ENCODE measurements at regions of chr18 and their contacts with region 1.

Region 1: DNA sequence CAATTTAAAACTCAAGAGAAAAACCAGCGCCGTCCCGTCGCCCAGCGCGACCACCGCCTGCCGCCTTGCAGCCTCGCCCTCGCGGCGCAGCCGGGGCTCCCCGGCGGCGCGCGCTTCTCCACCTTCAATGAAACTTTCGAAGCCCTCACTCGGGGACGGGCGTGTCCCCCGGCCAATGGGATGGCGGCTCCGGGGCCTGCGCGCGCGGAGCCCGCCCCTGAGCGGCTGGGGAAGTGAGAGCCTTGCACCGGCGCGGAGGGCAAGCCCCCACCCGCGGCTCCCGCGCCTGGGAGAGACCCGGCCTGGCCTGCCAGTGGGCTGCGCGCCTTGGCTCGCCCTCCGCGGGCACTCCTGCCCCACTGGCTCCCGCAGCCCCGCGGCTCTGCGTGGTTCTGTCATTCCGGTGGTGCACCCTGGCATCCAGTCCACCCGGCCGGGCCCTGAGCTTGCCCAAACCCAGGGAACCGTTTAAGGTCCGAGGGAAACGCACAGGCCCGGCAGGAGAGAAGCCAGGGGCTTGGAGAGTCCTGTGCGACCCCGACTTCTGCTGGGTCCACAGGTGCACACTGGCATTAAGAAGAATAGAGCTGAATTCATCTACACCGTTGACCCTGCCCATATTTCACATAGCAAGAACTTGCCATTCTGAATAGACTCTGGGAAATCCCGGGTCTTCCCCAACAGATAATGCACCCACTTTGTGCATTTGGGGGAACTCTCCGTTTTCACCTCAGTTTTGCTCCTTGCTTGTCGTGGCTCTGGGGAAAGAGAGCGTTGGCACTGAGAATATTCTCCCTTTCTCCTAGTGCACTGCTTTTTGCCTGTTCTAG is at the start of gene PIEZO2:
- DNase-seq: peak in 1 of 2 experiments; percentile 92
- H3K4me3 ChIP-seq: peak within 1 kb of the TSS; percentile 43 to 70 (median 50)
- H3K27ac ChIP-seq: no peak within 1 kb of the TSS
- H3K4me1 ChIP-seq: peaks cover 12 to 22% (median 18%) of the 10 kb centered on the region in 4 experiments
- H3K27me3 ChIP-seq: peaks cover 14 to 46% (median 35%) of the 10 kb centered on the region in 4 experiments; a peak in 6 of 7 replicates
- CTCF ChIP-seq: no peak
- EP300 ChIP-seq: no peak
- POLR2A ChIP-seq: no peak; a peak in 1 of 3 replicates
- RAD21 ChIP-seq: no peak
- total RNA-seq, gene PIEZO2: 14.7 and 16.5 TPM in 2 replicates

Region 2: DNA sequence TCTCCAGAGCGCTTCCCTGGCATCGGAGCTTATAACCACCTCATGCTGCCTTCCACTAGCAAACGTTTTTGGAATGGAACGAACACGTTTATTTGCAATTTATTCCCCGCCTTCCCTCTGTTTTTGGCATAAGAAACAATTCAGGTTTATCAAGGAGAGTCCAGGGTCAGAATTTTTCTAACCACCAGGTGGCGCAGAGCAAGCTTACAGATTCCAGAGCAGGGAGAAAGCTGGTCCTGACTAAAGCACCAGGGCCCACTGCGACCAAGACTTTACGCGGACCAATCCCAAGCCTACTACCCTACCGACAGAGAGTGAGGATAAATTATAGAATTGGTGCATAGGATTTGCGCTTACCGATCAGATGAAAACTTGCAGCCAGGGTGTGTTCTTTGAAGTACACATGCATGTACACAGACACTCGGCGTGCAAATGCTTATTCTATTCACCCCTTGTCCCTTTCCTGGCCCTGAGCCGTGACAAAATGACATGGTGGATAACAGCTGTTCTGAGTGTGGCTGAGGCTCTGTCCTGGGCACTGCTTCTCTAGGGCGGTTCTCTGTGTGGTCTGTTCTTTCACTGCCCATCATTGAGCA is 589.1 kb before region 1 on chr18:
- CTCF ChIA-PET with region 1: interaction called, 25 read pairs
- POLR2A ChIA-PET with region 1: no interaction called
- DNase-seq: peak; percentile 49 to 91
- H3K4me3 ChIP-seq: 0 out of 8 replicates have a peak overlapping the region, but pooled peaks of 1 of the 4 experiments have one; percentile 26
- H3K27ac ChIP-seq: no peak overlapping the region
- H3K4me1 ChIP-seq: peaks cover 0 to 6% (median 3%) of the 10 kb centered on the region in 4 experiments; a peak in 3 of 7 replicates
- H3K27me3 ChIP-seq: no peaks in the 10 kb centered on the region
- CTCF ChIP-seq: peak; percentile 16 to 79 (median 70)
- EP300 ChIP-seq: no peak
- POLR2A ChIP-seq: no peak
- RAD21 ChIP-seq: peak; percentile 78 to 83

Region 3: GRCh38 chr18:10787293-10787901 is 362.3 kb before region 1 on chr18:
- CTCF ChIA-PET with region 1: interaction called, 41 read pairs
- POLR2A ChIA-PET with region 1: no interaction called
- DNase-seq: peak in 1 of 2 experiments; percentile 88
- H3K4me3 ChIP-seq: no peak overlapping the region
- H3K27ac ChIP-seq: no peak overlapping the region
- H3K4me1 ChIP-seq: no peaks in the 10 kb centered on the region
- H3K27me3 ChIP-seq: peaks cover 0 to 1% (median 0%) of the 10 kb centered on the region in 4 experiments; a peak in 1 of 7 replicates
- CTCF ChIP-seq: peak; percentile 49 to 84 (median 69)
- EP300 ChIP-seq: no peak
- POLR2A ChIP-seq: no peak
- RAD21 ChIP-seq: peak; percentile 70 to 81

Region 4: DNA sequence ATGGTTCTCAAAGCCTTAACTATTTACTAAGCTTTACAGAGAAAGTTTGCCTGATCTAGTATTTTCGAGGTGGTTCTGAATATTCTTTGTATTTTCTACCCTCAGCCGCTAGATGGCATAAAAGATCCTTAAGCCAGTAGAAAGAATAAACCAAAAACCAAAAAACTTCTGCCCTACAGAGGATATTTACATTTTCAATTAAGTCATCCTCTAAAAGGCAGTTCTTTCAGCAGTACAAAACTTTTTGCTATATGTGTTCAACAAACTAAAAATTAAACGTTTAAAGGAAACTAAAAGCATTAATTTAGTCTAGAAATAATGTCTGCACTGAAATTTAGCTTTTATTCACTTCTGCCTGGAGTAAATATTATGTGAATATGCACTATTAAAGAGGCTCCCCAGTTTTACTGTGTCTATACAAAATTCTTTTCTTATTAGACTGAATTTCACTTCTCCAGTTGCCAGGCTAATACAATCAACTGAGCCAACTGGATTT is 297.8 kb before region 1 on chr18:
- CTCF ChIA-PET with region 1: interaction called, 96 read pairs
- POLR2A ChIA-PET with region 1: interaction called, 3 read pairs
- DNase-seq: no peak
- H3K4me3 ChIP-seq: no peak overlapping the region
- H3K27ac ChIP-seq: no peak overlapping the region
- H3K4me1 ChIP-seq: peaks cover 0 to 7% (median 3%) of the 10 kb centered on the region in 4 experiments; a peak in 4 of 7 replicates
- H3K27me3 ChIP-seq: no peaks in the 10 kb centered on the region
- CTCF ChIP-seq: peak in 2 of 3 experiments; percentile 52 to 53; a peak in 2 of 4 replicates
- EP300 ChIP-seq: no peak
- POLR2A ChIP-seq: no peak
- RAD21 ChIP-seq: peak; percentile 79 to 85

Region 5: GRCh38 chr18:11040823-11041656 is 108.6 kb before region 1 on chr18:
- CTCF ChIA-PET with region 1: interaction called, 10 read pairs
- POLR2A ChIA-PET with region 1: interaction called, 3 read pairs
- DNase-seq: peak in 1 of 2 experiments; percentile 58
- H3K4me3 ChIP-seq: no peak overlapping the region
- H3K27ac ChIP-seq: no peak overlapping the region
- H3K4me1 ChIP-seq: peaks cover 0 to 4% (median 0%) of the 10 kb centered on the region in 4 experiments; a peak in 1 of 7 replicates
- H3K27me3 ChIP-seq: no peaks in the 10 kb centered on the region
- CTCF ChIP-seq: peak; percentile 42 to 76 (median 73)
- EP300 ChIP-seq: no peak
- POLR2A ChIP-seq: no peak
- RAD21 ChIP-seq: peak; percentile 80 to 87

Region 6: GRCh38 chr18:11136241-11136640 is 13.4 kb before region 1 on chr18:
- CTCF ChIA-PET with region 1: interaction called, 11 read pairs
- POLR2A ChIA-PET with region 1: no interaction called
- DNase-seq: no peak
- H3K4me3 ChIP-seq: no peak overlapping the region
- H3K27ac ChIP-seq: no peak overlapping the region
- H3K4me1 ChIP-seq: no peaks in the 10 kb centered on the region
- H3K27me3 ChIP-seq: no peaks in the 10 kb centered on the region
- CTCF ChIP-seq: no peak
- EP300 ChIP-seq: no peak
- POLR2A ChIP-seq: no peak
- RAD21 ChIP-seq: no peak

Region 7: DNA sequence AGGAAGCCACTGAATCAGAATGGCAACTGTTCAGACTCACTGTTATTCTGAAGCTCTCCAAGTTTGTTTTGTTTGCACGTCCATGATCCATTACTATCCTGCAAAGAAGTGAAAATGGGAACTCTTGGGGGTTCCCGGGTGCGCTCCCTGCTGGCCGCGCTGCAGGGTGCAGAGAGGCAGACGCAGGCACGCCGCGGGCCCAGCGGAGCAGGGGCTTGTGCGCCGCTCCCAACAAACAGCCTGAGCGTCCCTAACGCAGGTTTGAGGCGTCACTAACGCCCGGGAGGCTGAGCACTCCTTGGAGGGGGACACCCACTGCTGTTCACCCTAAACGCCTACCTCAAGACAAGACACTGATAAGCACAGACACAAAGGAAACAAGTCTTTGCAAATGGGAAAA is 14.0 kb after region 1 on chr18:
- CTCF ChIA-PET with region 1: interaction called, 10 read pairs
- POLR2A ChIA-PET with region 1: interaction called, 5 read pairs
- DNase-seq: peak in 1 of 2 experiments; percentile 69
- H3K4me3 ChIP-seq: peak overlapping the region in 1 of 4 experiments; percentile 24; a peak in 1 of 8 replicates
- H3K27ac ChIP-seq: no peak overlapping the region
- H3K4me1 ChIP-seq: peaks cover 0 to 2% (median 1%) of the 10 kb centered on the region in 4 experiments; a peak in 4 of 7 replicates
- H3K27me3 ChIP-seq: peaks cover 0 to 19% (median 11%) of the 10 kb centered on the region in 4 experiments; a peak in 5 of 7 replicates
- CTCF ChIP-seq: peak; percentile 44 to 59 (median 57)
- EP300 ChIP-seq: no peak
- POLR2A ChIP-seq: no peak
- RAD21 ChIP-seq: peak; percentile 40 to 47

Measured in H1 (cell line).